Panc1 (cell line): ENCODE measurements at regions of chr19 and their contacts with region 1.

Region 1: DNA sequence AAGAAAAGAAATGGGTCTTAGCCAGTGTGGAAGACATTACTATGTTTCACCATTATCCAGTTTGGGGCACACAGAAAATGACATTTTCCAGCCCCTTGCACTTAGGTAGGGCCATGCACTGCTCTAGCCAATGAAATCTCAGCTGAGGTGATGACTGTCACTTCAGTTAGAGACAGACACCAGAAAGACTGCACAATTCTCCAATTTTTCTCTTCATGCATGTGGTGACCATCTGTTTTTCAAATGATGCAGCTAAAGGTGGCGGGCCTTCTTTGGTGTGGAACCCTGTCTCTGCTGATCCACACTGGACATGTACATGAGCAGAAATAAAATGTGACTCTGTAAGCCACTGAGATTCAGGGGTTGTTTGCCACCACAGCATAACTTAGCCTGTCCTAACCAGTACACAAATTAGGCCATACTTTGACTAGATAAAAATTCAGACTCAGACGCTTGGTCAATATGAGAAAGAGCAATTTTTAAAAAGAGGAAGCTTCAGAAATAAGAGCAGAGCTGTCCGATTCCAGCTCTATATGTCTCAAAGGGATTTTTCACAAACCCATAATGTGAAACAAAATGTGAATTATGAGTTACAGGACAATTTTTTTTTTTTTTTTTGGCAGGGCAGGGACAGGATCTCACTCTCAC is 6.7 kb downstream of the ZNF565 start:
- DNase-seq: no peak
- ATAC-seq: no peak
- H3K4me3 ChIP-seq: no peak overlapping the region
- H3K27ac ChIP-seq: no peak overlapping the region
- H3K4me1 ChIP-seq: no peaks in the 10 kb centered on the region
- H3K27me3 ChIP-seq: no peaks in the 10 kb centered on the region
- CTCF ChIP-seq: no peak

Region 2: DNA sequence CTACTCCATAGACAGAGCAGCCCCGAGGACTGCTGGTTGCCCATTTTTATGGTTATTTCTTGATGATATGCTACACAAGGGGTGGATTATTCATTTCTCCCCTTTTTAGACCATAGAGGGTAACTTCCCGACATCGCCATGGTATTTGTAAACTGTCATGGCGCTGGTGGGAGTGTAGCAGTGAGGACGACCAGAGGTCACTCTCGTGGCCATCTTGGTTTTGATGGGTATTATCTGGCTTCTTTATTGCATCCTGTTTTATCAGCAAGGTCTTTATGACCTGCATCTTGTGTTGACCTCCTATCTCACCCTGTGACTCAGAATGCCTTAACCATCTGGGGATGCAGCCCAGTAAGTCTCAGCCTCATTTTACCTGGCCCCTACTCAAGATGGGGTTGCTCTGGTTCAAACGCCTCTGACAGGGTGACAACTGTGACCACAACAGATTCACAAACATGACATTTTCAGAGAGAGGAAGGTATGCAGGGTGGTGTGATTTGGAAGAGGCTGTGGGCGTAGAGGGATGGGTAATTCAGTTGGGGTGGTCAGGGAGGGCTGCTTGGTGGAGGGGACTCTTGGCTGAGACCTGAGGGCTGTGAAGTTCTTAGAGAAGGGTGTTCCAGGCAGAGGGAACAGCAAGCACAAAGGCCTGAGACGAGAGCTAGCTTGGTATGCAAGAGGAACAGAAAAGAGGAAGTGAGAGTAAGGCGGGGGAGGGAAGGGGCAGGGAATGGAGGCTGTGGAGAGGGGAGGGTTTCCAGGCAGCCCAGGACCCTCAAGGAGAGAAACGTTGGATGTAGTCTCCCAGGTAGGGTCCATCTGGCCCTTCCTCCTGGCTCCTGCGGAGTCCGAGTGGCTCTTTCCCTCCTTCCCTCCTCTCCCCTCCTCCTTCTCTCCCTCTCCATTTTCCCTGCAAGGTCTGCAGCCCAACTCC is 1002.7 kb before region 1 on chr19:
- CTCF ChIA-PET with region 1: no interaction called
- POLR2A ChIA-PET with region 1: no interaction called
- in situ Hi-C with region 1: no loop called
- intact Hi-C with region 1: no loop called
- DNase-seq: no peak
- ATAC-seq: no peak
- H3K4me3 ChIP-seq: no peak overlapping the region
- H3K27ac ChIP-seq: no peak overlapping the region
- H3K4me1 ChIP-seq: no peaks in the 10 kb centered on the region
- H3K27me3 ChIP-seq: peaks cover 4% of the 10 kb centered on the region; the same call in 1 of the 2 replicates
- CTCF ChIP-seq: no peak

Region 3: DNA sequence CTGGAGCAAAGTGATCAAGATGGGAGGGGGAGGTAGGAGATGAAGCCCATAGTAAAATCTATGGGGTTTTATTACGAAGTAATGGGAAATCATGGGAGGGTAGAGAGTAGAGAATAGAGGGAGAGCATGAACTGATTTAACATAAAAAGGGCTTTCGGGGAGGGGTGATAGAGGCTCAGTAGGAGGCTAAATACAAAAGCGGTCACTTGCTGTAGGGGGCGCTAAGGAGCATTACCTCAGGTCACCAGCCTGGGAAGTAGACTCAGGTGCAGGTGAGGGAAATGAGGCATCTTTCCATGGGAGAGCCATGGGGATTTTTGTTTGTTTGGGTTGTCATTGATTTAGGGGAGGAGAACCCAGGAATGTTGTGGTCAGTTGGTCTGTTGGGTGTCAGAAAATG is 731.6 kb before region 1 on chr19:
- CTCF ChIA-PET with region 1: no interaction called
- POLR2A ChIA-PET with region 1: no interaction called
- in situ Hi-C with region 1: no loop called
- intact Hi-C with region 1: no loop called
- DNase-seq: no peak
- ATAC-seq: no peak
- H3K4me3 ChIP-seq: no peak overlapping the region
- H3K27ac ChIP-seq: no peak overlapping the region
- H3K4me1 ChIP-seq: no peaks in the 10 kb centered on the region
- H3K27me3 ChIP-seq: no peaks in the 10 kb centered on the region
- CTCF ChIP-seq: peak; percentile 67

Region 4: GRCh38 chr19:36114763-36115452 is 92.8 kb before region 1 on chr19 and contains the start of gene POLR2I:
- CTCF ChIA-PET with region 1: no interaction called
- POLR2A ChIA-PET with region 1: interaction called, 10 read pairs
- in situ Hi-C with region 1: no loop called
- intact Hi-C with region 1: no loop called
- DNase-seq: peak; percentile 99
- ATAC-seq: peak; percentile 95
- H3K4me3 ChIP-seq: peak within 1 kb of the TSS; percentile 85 to 96
- H3K27ac ChIP-seq: peak within 1 kb of the TSS; percentile 92
- H3K4me1 ChIP-seq: peaks cover 14% of the 10 kb centered on the region
- H3K27me3 ChIP-seq: no peaks in the 10 kb centered on the region
- CTCF ChIP-seq: no peak
- total RNA-seq, gene POLR2I: 174 TPM

Region 5: DNA sequence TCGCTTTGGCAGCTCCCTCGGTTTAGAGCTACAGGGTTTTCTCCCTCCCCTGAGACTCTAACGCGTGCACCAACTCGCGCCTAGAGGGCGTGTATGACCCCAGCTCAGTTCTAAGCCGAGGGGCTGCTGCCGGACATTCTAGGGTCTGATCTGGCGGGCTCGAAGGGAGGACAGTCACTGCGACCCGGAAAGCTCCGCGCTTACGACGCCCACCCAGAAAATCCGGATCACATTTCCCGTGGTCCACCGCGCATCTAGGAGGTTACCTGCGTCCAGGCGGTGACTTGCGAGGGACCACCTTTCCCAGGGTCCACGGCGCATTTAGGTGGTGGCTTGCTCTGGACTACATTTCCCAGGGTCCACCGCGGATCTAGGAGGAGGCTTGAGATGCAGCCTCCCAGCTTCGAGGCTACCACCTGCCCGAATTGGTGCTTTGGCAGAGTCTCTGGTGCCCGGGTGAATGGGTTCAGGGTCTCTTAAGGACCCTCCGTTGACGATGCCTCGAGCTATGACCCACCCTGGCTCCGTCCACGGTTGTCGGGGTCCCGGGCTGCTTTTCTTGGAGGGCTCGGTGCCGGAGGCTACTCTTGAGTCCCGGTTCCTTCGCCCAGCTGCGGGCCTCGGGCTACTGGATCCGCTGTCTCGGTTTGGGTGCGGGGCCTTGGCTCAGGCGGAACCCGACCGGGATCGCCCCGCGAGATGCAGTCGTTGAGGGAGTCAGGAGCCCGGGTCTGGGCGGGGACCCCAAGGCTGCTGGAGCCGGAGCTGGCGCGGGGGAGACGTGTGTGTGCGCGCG is 37.7 kb after region 1 on chr19:
- CTCF ChIA-PET with region 1: no interaction called
- POLR2A ChIA-PET with region 1: no interaction called
- in situ Hi-C with region 1: no loop called
- intact Hi-C with region 1: no loop called
- DNase-seq: no peak
- ATAC-seq: no peak; the same call in 1 of the 2 replicates
- H3K4me3 ChIP-seq: peak overlapping the region in 1 of 2 experiments; percentile 9; a peak in 2 of 4 replicates
- H3K27ac ChIP-seq: no peak overlapping the region
- H3K4me1 ChIP-seq: no peaks in the 10 kb centered on the region
- H3K27me3 ChIP-seq: no peaks in the 10 kb centered on the region
- CTCF ChIP-seq: no peak